Naive thymus-derived CD4-positive, alpha-beta T cell (primary cell): ENCODE measurements at regions of chr4 and their contacts with region 1.

Region 1: DNA sequence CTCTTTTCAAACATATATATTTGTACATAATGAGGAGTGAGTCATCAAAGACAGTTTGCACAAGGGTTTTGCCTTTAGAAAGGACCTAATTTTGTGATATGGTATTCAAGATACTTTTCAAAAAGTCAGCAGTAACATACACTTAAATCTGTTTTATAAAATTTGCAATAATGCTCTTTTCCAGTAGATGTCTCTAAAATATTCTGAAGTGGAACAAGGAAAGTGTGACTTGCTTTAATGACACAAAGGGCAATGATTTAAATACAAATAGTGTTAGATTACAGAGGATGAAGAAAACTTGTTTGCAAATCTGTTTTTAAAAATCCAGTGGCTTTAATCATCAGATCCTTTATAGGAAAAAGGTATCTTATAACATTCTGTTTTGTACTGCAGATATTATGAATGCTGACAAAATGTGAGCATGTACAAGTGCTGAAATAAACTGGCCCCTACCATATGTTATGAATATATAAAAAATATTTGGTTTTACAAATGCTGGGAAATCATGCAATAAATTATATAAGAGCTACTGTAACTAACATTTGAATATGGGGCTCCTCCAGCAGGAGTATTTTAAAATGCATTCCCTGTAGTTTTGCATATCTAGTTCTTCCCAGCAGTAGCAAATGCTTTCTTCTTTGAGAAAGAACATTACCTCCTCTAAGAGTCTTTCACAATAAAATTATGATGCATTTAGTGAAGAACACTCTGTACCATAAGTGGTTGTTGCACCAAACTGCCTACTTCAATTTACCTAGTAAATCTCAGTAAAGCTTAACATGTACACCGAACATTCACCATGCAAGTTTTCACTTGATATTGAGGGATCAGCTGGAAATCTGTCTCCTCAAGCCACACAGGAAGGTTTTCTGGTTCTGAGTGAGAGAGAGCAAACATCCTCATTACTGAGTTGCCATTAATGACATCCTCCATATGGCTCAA is 20.2 kb downstream of the MMRN1 start:
- DNase-seq: no peak
- ATAC-seq: no peak
- H3K4me3 ChIP-seq: no peak overlapping the region
- H3K4me3 Mint-ChIP-seq: no peak overlapping the region
- H3K27ac ChIP-seq: no peak overlapping the region
- H3K27ac Mint-ChIP-seq: no peak overlapping the region
- H3K4me1 ChIP-seq: no peaks in the 10 kb centered on the region
- H3K4me1 Mint-ChIP-seq: no peaks in the 10 kb centered on the region
- H3K27me3 ChIP-seq: no peaks in the 10 kb centered on the region
- H3K27me3 Mint-ChIP-seq: peaks cover 0 to 11% (median 0%) of the 10 kb centered on the region in 5 donors

Region 2: GRCh38 chr4:90293320-90293719 is 378.4 kb after region 1 on chr4:
- CTCF ChIA-PET with region 1: no interaction called
- POLR2A ChIA-PET with region 1: no interaction called
- intact Hi-C with region 1: loop called (anchors 2 kb)
- DNase-seq: no peak
- ATAC-seq: no peak
- H3K4me3 ChIP-seq: no peak overlapping the region
- H3K4me3 Mint-ChIP-seq: no peak overlapping the region
- H3K27ac ChIP-seq: no peak overlapping the region
- H3K27ac Mint-ChIP-seq: no peak overlapping the region
- H3K4me1 ChIP-seq: no peaks in the 10 kb centered on the region
- H3K4me1 Mint-ChIP-seq: no peaks in the 10 kb centered on the region
- H3K27me3 ChIP-seq: no peaks in the 10 kb centered on the region
- H3K27me3 Mint-ChIP-seq: no peaks in the 10 kb centered on the region